ENCODE measurements at regions of chr5 and their contacts with region 1.

Region 1: GRCh38 chr5:73565139-73565968 is at the starts of genes ANKRA2 and UTP15:
- DNase-seq: peak; percentile 100
- ATAC-seq: peak; percentile 92
- H3K4me3 Mint-ChIP-seq: peak within 1 kb of the TSS; percentile 93
- H3K27ac Mint-ChIP-seq: peak within 1 kb of the TSS; percentile 100
- H3K4me1 Mint-ChIP-seq: peaks cover 33% of the 10 kb centered on the region
- H3K27me3 Mint-ChIP-seq: no peaks in the 10 kb centered on the region
- total RNA-seq, gene ANKRA2: 16.3 to 18.4 TPM
- total RNA-seq, gene UTP15: 33.6 to 42.4 TPM

Region 2: GRCh38 chr5:72293495-72294055 is 1271.8 kb before region 1 on chr5:
- CTCF ChIA-PET with region 1: no interaction called
- POLR2A ChIA-PET with region 1: no interaction called
- intact Hi-C with region 1: no loop called
- DNase-seq: no peak
- ATAC-seq: no peak
- H3K4me3 Mint-ChIP-seq: no peak overlapping the region
- H3K27ac Mint-ChIP-seq: no peak overlapping the region
- H3K4me1 Mint-ChIP-seq: peaks cover 4% of the 10 kb centered on the region
- H3K27me3 Mint-ChIP-seq: no peaks in the 10 kb centered on the region

Region 3: GRCh38 chr5:72883864-72884263 is 681.5 kb before region 1 on chr5:
- CTCF ChIA-PET with region 1: no interaction called
- POLR2A ChIA-PET with region 1: no interaction called
- intact Hi-C with region 1: loop called in 1 of 2 experiments (anchors 10 kb)
- DNase-seq: no peak
- ATAC-seq: no peak
- H3K4me3 Mint-ChIP-seq: no peak overlapping the region
- H3K27ac Mint-ChIP-seq: no peak overlapping the region
- H3K4me1 Mint-ChIP-seq: peaks cover 6% of the 10 kb centered on the region
- H3K27me3 Mint-ChIP-seq: no peaks in the 10 kb centered on the region

Region 4: DNA sequence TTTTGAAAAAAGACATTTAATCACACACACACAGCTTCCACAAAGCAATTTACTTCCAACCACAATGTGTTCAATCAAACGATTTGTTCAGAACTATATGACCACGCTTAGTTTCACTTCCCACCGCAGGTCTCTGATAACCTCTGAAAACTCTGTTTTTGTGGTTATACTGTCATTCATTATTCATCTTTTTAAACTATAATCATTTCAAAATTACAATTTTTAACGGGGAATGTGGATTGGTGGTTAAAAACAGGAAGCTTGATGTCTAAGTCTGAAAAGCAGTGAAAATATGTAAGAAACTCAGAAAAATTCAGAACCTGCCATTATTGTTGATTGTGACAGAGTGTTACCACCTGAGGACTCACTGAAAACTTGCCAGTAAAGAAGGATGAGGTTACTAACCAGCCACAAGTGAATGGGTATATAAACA is 405.1 kb before region 1 on chr5:
- CTCF ChIA-PET with region 1: no interaction called
- POLR2A ChIA-PET with region 1: no interaction called
- intact Hi-C with region 1: no loop called
- DNase-seq: peak; percentile 89
- ATAC-seq: peak; percentile 91
- H3K4me3 Mint-ChIP-seq: no peak overlapping the region
- H3K27ac Mint-ChIP-seq: no peak overlapping the region
- H3K4me1 Mint-ChIP-seq: peaks cover 36% of the 10 kb centered on the region
- H3K27me3 Mint-ChIP-seq: peaks cover 73% of the 10 kb centered on the region

Region 5: GRCh38 chr5:73280821-73281746 is 284.3 kb before region 1 on chr5:
- CTCF ChIA-PET with region 1: no interaction called
- POLR2A ChIA-PET with region 1: no interaction called
- intact Hi-C with region 1: no loop called
- DNase-seq: no peak
- ATAC-seq: no peak
- H3K4me3 Mint-ChIP-seq: no peak overlapping the region
- H3K27ac Mint-ChIP-seq: no peak overlapping the region
- H3K4me1 Mint-ChIP-seq: no peaks in the 10 kb centered on the region
- H3K27me3 Mint-ChIP-seq: peaks cover 45% of the 10 kb centered on the region

Region 6: GRCh38 chr5:73498057-73499008 is 67.0 kb before region 1 on chr5 and contains the start of gene BTF3:
- CTCF ChIA-PET with region 1: interaction called, 5 read pairs
- POLR2A ChIA-PET with region 1: interaction called, 3 read pairs
- intact Hi-C with region 1: loop called (anchors 1 kb)
- DNase-seq: peak; percentile 96
- ATAC-seq: peak; percentile 95
- H3K4me3 Mint-ChIP-seq: peak within 1 kb of the TSS; percentile 87
- H3K27ac Mint-ChIP-seq: peak within 1 kb of the TSS; percentile 98
- H3K4me1 Mint-ChIP-seq: peaks cover 35% of the 10 kb centered on the region
- H3K27me3 Mint-ChIP-seq: peaks cover 2% of the 10 kb centered on the region
- total RNA-seq, gene BTF3: 1,030 to 1,213 TPM

Region 7: GRCh38 chr5:73519531-73520283 is 45.6 kb before region 1 on chr5:
- CTCF ChIA-PET with region 1: interaction called, 3 read pairs
- POLR2A ChIA-PET with region 1: no interaction called
- intact Hi-C with region 1: loop called in 1 of 2 experiments (anchors 1 kb)
- DNase-seq: peak; percentile 78
- ATAC-seq: peak; percentile 100
- H3K4me3 Mint-ChIP-seq: no peak overlapping the region
- H3K27ac Mint-ChIP-seq: no peak overlapping the region
- H3K4me1 Mint-ChIP-seq: peaks cover 5% of the 10 kb centered on the region
- H3K27me3 Mint-ChIP-seq: no peaks in the 10 kb centered on the region

Region 8: GRCh38 chr5:74684900-74685851 is 1119.8 kb after region 1 on chr5 and contains the start of gene HEXB:
- CTCF ChIA-PET with region 1: no interaction called
- POLR2A ChIA-PET with region 1: no interaction called
- intact Hi-C with region 1: loop called in 1 of 2 experiments (anchors 5 kb)
- DNase-seq: peak; percentile 94
- ATAC-seq: peak; percentile 98
- H3K4me3 Mint-ChIP-seq: peak within 1 kb of the TSS; percentile 73
- H3K27ac Mint-ChIP-seq: peak within 1 kb of the TSS; percentile 87
- H3K4me1 Mint-ChIP-seq: peaks cover 21% of the 10 kb centered on the region
- H3K27me3 Mint-ChIP-seq: no peaks in the 10 kb centered on the region
- total RNA-seq, gene HEXB: 42.6 to 47.6 TPM

Region 9: GRCh38 chr5:74766849-74767578 is 1201.7 kb after region 1 on chr5 and contains the starts of genes GFM2 and NSA2:
- CTCF ChIA-PET with region 1: no interaction called
- POLR2A ChIA-PET with region 1: no interaction called
- intact Hi-C with region 1: loop called in 1 of 2 experiments (anchors 1 kb)
- DNase-seq: peak; percentile 95
- ATAC-seq: peak; percentile 85
- H3K4me3 Mint-ChIP-seq: peak within 1 kb of the TSS; percentile 94
- H3K27ac Mint-ChIP-seq: peak within 1 kb of the TSS; percentile 99
- H3K4me1 Mint-ChIP-seq: peaks cover 34% of the 10 kb centered on the region
- H3K27me3 Mint-ChIP-seq: no peaks in the 10 kb centered on the region
- total RNA-seq, gene GFM2: 34.7 to 40.4 TPM
- total RNA-seq, gene NSA2: 163 to 253 TPM

Measured in activated CD4-positive, alpha-beta T cell treated with anti-CD3 and anti-CD28 coated beads for 36 hours (primary cell).